Ascending aorta (tissue), 2 donors: ENCODE measurements at regions of chr14 and their contacts with region 1.

Region 1: GRCh38 chr14:96038920-96039632 is at the start of gene C14orf132:
- DNase-seq: peak in 1 of 2 donors; percentile 87
- H3K4me3 ChIP-seq: peak within 1 kb of the TSS; percentile 56 to 79
- H3K27ac ChIP-seq: peak within 1 kb of the TSS; percentile 90 to 95
- H3K4me1 ChIP-seq: peaks cover 7 to 18% of the 10 kb centered on the region in 2 donors
- H3K27me3 ChIP-seq: no peaks in the 10 kb centered on the region
- CTCF ChIP-seq: no peak
- total RNA-seq, gene C14orf132: 23.9 TPM

Region 2: DNA sequence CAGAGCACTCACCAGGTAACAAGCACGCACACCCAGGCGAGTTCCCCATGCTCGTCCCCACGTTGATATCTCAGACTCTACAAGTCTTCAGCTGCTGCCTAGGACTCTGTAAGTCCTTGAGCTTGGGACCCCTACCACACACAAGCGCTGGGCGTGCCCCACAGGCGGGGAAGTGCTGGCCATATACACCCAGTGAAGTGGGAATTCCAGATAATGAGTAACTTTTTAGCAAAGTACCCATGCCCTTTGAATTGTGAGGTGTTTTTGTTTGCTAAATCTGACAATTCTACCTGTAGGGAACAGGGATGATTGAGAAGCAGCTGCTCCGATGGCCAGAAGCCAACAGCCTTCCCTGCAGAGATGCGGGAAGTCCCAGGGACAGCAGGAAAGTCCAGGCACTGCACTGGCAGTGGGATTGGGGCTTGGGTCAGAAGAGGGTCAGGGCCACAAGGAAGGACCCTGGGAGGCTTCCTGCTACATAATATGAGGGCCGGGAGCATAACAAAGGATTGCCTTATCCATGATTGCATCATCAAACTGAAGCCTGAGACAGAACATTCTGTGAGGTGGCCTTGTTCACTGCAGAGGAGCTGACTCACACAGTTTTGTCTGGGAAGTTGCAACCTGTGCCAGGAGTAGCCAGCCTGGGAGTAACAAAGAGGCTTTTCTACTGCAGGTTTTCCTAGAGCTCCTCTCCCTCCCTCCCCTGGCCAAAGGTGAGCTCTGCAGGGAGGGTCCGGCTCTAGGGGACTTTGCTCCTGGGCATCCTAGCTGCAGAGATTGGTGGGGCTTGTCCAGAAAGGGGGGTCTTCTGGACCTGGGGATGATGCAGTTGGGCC is 1440.0 kb before region 1 on chr14:
- intact Hi-C with region 1: loop called (anchors 5 kb)
- DNase-seq: peak; percentile 50 to 87
- H3K4me3 ChIP-seq: no peak overlapping the region
- H3K27ac ChIP-seq: peak overlapping the region; percentile 73 to 79
- H3K4me1 ChIP-seq: peaks cover 10 to 39% of the 10 kb centered on the region in 2 donors
- H3K27me3 ChIP-seq: no peaks in the 10 kb centered on the region
- CTCF ChIP-seq: no peak

Region 3: GRCh38 chr14:95534299-95535225 is 504.5 kb before region 1 on chr14 and contains the start of gene GLRX5:
- intact Hi-C with region 1: loop called (anchors 5 kb)
- DNase-seq: peak; percentile 100
- H3K4me3 ChIP-seq: peak within 1 kb of the TSS; percentile 75 to 85
- H3K27ac ChIP-seq: peak within 1 kb of the TSS; percentile 76 to 84
- H3K4me1 ChIP-seq: peaks cover 26 to 46% of the 10 kb centered on the region in 2 donors
- H3K27me3 ChIP-seq: no peaks in the 10 kb centered on the region
- CTCF ChIP-seq: peak in 1 of 3 experiments; percentile 29
- total RNA-seq, gene GLRX5: 24.6 TPM

Region 4: DNA sequence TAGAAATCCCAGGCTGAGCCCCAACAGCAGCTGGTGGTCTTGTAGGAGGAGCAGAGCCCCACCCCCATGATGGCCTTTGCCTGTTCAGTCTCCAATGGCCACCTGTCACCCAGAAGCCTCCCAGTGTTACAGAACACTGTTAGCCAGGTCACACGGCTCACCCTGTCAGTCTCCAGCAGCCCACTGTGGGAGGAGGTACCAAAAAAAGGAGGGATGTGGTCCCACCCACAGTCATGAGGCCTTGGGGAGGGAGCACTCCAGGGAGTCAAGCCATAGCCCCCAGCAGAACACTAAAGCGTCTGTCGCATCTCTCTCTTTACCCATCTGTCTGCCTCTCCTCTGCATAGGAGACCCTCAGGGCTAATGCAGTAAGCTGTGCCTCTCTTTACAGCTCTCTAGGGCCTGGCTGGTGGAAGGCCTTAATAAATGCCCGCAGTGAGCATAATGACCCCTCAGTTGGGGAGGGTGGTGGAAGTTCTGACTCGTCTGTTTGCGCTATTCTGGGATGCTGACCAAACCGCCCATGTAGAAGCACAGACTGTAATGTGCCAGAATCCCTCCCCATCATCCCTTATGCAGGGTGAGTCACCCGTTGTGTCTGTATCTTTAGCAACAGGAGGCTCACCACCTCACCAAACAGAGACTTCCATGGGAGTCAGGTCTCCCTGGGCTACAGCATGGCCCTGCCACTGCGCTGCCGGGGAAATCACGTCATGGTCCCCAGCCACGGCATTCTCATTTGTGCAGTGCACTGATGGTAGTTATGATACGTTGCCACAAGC is 14.7 kb after region 1 on chr14:
- intact Hi-C with region 1: loop called (anchors 1 kb)
- DNase-seq: peak; percentile 87 to 96
- H3K4me3 ChIP-seq: peak overlapping the region in 1 of 2 donors; percentile 14
- H3K27ac ChIP-seq: peak overlapping the region; percentile 81 to 93
- H3K4me1 ChIP-seq: peaks cover 15 to 34% of the 10 kb centered on the region in 2 donors
- H3K27me3 ChIP-seq: no peaks in the 10 kb centered on the region
- CTCF ChIP-seq: no peak

Region 5: DNA sequence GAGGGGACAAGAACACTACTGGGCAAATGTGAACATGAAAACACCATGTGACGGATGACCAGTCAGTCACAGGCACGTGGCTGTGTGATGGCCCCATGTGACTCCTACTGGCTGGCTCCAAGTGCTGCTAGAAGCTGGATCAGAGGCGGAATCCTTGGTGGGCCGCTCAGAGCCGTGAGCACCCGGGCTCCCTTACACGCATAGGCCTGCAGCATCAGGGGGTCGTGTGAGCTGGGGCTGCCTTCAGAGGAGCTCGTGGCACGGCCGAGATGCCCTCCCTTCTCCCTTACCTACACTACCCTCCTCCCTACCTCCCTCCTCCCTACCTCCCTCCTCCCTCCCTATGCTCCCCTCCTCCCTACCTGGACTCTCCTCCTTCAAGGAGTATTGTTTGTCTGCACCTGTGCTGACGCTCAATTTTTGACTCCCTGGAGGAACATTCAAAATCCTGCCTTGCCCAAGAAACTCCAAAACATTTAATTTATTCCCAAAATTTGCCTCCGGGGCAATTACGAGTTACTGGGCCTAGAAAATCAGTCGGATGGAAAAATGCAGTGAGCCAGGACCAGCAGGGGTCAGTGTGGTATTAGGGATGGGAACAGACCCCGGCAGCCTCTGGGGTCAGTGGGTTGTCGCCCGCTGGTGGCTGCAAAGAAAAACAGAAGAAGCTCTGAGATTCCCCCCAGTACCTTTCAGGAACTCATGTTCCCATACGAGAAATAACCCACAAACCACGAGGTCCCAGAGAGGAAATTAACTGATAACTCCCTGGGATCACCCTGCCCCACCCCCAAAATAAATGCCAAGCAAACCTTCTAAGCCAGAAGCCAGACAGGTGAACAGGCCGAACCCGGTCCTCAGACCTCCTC is 61.3 kb after region 1 on chr14:
- intact Hi-C with region 1: loop called (anchors 5 kb)
- DNase-seq: peak in 1 of 2 donors; percentile 76
- H3K4me3 ChIP-seq: no peak overlapping the region
- H3K27ac ChIP-seq: no peak overlapping the region
- H3K4me1 ChIP-seq: no peaks in the 10 kb centered on the region
- H3K27me3 ChIP-seq: no peaks in the 10 kb centered on the region
- CTCF ChIP-seq: peak; percentile 57 to 68 (median 60)

Region 6: DNA sequence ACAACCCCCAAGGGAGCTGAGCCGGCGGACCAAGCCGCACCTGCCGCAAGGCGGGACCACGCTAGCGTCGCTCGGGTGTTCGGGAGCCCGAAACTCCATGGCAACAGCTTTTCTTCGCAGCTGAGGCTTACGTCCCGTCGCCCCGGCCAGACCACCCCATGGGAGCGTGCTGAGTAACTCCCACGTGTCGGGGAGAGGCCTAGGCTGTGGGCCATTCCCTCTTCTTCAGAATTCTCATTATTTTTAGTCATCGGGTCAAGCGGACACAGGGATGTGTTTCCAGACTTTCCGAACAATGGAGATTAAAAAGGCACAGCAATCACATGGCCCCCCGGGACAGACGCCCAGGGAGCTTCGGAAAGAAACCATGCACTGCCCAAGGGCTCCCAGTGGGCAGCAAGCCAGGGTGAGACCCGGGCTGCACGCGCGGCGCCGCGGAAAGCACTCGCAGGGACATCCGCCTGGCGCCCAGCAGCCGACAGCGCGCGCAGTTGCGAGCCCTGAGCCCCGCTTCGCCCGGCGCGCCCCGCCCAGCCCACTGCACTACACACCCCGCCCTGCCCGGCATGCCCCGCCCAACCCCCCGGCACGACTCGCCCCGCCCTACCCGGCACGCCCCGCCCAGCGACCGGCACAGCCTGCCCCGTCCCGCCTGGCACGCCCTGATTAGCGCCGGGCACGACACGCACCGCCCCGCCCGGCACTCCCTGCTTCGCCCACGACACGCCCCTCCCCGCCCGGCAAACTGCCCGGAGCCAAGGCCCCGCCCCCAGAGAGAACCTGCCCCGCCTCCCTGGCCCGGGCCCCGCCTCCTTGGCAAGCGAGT is 352.4 kb after region 1 on chr14:
- intact Hi-C with region 1: loop called (anchors 10 kb)
- DNase-seq: peak; percentile 82 to 98
- H3K4me3 ChIP-seq: peak overlapping the region; percentile 41 to 77
- H3K27ac ChIP-seq: peak overlapping the region; percentile 49 to 62
- H3K4me1 ChIP-seq: peaks cover 3 to 6% of the 10 kb centered on the region in 2 donors
- H3K27me3 ChIP-seq: no peaks in the 10 kb centered on the region
- CTCF ChIP-seq: no peak

Region 7: DNA sequence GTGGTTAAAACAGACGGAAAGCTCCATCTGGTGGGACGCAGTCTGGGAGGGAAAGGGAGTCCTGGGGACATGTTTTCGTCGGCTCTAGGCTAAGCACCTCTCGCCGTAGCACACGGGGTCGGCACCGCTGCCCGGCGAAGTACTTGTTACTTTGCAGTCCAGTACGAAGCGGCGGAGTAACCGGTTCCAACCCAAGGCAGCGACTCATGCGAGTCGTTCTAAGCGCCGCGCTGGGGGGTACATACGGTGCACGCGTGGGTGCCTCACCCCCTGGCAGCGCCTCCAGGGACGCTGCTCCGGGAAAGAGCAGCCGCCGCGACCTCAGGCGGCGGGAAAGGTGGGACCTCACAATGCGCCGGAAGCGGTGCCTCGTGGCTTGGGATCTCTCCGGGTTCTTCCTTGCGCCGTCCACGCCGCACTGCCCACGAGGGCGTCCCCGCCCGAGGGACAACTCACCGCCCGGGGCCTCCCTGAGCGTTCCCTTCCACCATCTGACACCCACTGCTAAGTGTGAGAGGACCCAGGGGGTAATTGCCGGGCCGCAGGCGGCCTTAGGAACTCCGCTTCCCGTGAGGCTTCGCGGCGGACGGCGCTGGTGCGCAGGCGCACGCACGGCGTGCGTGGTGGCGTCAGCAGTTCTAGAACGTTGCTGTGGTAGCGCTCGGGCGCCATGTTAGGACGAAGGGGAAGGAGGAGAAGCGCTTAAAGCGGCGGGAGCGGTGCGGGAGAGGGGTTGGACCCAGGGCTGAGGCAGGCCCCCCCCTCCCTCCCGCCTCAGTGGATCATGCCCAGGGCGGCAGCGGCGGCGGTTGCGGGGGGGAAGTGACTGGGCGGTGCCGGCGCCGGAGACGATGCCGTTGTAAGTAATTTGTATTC is 462.9 kb after region 1 on chr14 and contains the start of gene PAPOLA:
- intact Hi-C with region 1: loop called (anchors 5 kb)
- DNase-seq: peak; percentile 82 to 97
- H3K4me3 ChIP-seq: peak within 1 kb of the TSS; percentile 90 to 94
- H3K27ac ChIP-seq: peak within 1 kb of the TSS; percentile 90 to 97
- H3K4me1 ChIP-seq: peaks cover 7 to 15% of the 10 kb centered on the region in 2 donors
- H3K27me3 ChIP-seq: no peaks in the 10 kb centered on the region
- CTCF ChIP-seq: no peak
- total RNA-seq, gene PAPOLA: 64.2 TPM